ENCODE measurements at regions of chr2 and their contacts with region 1.

Region 1: GRCh38 chr2:45935791-45936622 is 284.5 kb downstream of the PRKCE start:
- DNase-seq: peak; percentile 79
- ATAC-seq: peak; percentile 92
- H3K4me3 ChIP-seq: no peak overlapping the region; a peak in 1 of 6 replicates
- H3K27ac ChIP-seq: no peak overlapping the region
- H3K4me1 ChIP-seq: peaks cover 14% of the 10 kb centered on the region
- H3K27me3 ChIP-seq: no peaks in the 10 kb centered on the region
- CTCF ChIP-seq: peak; percentile 96
- EP300 ChIP-seq: no peak
- POLR2A ChIP-seq: no peak
- RAD21 ChIP-seq: peak; percentile 95

Region 2: DNA sequence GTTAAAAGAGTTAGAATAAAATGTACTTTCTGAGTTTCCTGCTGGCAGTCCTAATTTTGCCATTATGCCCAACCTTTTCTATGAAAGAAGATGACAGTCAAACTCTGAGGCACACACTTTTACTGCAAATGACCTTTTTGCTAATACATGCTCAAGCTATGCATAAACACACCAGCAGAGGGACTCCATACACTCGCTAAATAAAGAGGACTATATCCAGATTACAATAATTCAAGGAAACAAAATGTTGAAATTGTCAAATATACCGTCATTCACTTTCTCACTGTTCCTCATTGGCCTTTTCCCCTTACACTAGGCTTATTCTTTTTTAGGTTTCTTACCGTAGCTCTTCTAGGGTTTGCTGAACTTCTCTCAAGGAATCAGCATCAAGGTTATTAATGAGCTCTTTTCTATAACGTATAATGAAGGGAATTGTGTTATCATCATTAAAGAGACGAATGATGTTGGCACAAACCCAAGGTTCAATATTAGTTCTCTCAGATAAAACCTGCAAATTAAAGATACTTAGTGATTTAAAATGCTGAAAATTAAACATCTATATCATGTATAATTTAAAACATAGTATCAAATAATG is 350.6 kb before region 1 on chr2:
- CTCF ChIA-PET with region 1: no interaction called
- POLR2A ChIA-PET with region 1: no interaction called
- in situ Hi-C with region 1: no loop called
- intact Hi-C with region 1: loop called (anchors 1 kb)
- DNase-seq: peak; percentile 50
- ATAC-seq: peak; percentile 79
- H3K4me3 ChIP-seq: no peak overlapping the region
- H3K27ac ChIP-seq: no peak overlapping the region
- H3K4me1 ChIP-seq: no peaks in the 10 kb centered on the region
- H3K27me3 ChIP-seq: no peaks in the 10 kb centered on the region
- CTCF ChIP-seq: peak; percentile 35
- EP300 ChIP-seq: no peak
- POLR2A ChIP-seq: no peak
- RAD21 ChIP-seq: no peak

Region 3: DNA sequence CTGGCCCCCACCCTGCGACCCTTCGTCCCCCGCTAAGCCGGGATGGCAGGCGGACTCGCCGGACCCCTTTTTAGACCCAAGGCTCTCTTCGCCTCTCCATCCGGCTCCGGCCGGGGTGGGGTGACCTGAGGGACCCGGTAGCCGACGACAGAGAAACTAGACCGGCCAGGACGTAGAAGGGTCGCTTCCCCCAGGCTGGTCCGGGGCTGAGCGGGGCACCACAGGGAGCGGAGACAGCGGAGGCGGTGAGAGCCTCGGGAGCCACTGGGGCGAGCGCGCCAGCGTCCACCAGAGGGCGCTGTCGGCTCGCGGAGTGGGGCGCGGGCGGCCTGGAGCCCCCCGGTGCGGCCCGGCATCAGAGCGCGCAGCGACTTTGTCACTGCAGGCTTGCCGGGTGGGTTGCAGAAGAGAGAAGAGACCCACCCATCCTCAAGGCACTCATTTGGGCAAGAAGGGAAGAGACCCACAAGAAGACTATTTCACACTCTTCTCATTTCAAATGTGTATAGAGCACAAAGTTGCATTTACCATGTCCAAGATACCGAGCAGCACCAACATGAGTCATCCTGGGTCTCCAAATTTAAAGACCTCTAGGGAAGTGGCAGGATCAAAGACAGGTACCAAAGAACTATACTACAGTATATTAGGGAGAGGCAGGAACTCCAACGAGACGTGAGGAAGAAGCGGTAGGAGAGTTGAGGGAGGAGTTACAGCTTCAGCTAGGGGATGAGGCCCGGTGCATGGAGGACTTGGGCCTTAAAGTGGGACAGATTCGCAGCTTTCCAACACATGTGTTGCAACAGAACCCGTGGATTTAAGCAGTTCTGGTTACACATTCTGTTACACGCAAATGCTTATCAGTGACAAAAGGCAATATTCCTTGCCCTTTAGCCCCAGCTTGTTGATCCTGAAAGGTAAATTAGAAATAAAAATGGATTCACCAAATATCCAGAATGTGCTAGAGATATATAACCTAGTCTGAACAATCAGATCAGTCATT is 292.2 kb before region 1 on chr2:
- CTCF ChIA-PET with region 1: interaction called, 31 read pairs
- POLR2A ChIA-PET with region 1: no interaction called
- in situ Hi-C with region 1: loop called (anchors 5 kb)
- intact Hi-C with region 1: loop called (anchors 1 kb)
- DNase-seq: peak; percentile 27
- ATAC-seq: peak; percentile 98
- H3K4me3 ChIP-seq: peak overlapping the region; percentile 23 to 63 (median 41); a peak in 5 of 6 replicates
- H3K27ac ChIP-seq: no peak overlapping the region
- H3K4me1 ChIP-seq: peaks cover 22% of the 10 kb centered on the region
- H3K27me3 ChIP-seq: peaks cover 7 to 43% of the 10 kb centered on the region in 2 experiments; a peak in 4 of 5 replicates
- CTCF ChIP-seq: peak; percentile 96
- EP300 ChIP-seq: no peak
- POLR2A ChIP-seq: no peak
- RAD21 ChIP-seq: peak; percentile 100

Region 4: DNA sequence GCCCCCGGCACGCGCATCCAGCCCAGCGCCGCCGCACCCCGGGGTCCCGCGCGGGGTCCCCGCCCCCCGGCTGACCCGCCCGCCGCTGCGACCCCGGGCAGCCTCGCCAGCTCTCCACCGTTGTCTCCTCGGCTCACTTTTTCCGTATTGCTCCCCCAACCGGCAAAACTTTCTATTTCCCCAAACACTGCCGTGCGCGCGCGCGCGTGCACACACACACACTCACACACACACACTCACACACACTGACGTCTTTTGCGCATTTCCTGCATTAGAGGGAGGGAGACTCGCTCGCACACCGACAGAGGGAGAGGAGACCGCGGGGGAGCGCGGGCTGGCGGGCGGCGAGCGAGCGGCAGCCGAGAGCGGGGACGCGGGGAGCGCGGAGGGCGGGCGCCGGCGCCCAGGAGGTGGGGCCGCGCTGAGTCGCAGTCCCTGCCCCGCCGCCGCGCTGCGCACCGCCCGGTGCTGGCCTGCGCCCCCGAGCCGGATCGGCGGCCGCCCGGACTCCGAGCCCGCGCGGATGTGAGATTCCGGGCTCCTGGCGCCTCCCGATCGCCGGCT is 285.1 kb before region 1 on chr2:
- CTCF ChIA-PET with region 1: interaction called, 3 read pairs
- POLR2A ChIA-PET with region 1: interaction called, 3 read pairs
- in situ Hi-C with region 1: loop called (anchors 5 kb)
- intact Hi-C with region 1: no loop called
- DNase-seq: peak; percentile 92
- ATAC-seq: peak; percentile 88
- H3K4me3 ChIP-seq: peak overlapping the region; percentile 80 to 89 (median 82)
- H3K27ac ChIP-seq: peak overlapping the region; percentile 57
- H3K4me1 ChIP-seq: peaks cover 42% of the 10 kb centered on the region
- H3K27me3 ChIP-seq: peaks cover 0 to 15% of the 10 kb centered on the region in 2 experiments; a peak in 2 of 5 replicates
- CTCF ChIP-seq: peak; percentile 82
- EP300 ChIP-seq: peak in 1 of 2 experiments; percentile 31; a peak in 1 of 4 replicates
- POLR2A ChIP-seq: peak in 1 of 2 experiments; percentile 49; a peak in 1 of 4 replicates
- RAD21 ChIP-seq: peak; percentile 56

Region 5: GRCh38 chr2:45729753-45730512 is 206.1 kb before region 1 on chr2:
- CTCF ChIA-PET with region 1: no interaction called
- POLR2A ChIA-PET with region 1: no interaction called
- in situ Hi-C with region 1: no loop called
- intact Hi-C with region 1: loop called (anchors 1 kb)
- DNase-seq: peak; percentile 57
- ATAC-seq: peak; percentile 95
- H3K4me3 ChIP-seq: no peak overlapping the region
- H3K27ac ChIP-seq: no peak overlapping the region
- H3K4me1 ChIP-seq: no peaks in the 10 kb centered on the region
- H3K27me3 ChIP-seq: no peaks in the 10 kb centered on the region
- CTCF ChIP-seq: peak; percentile 49
- EP300 ChIP-seq: no peak
- POLR2A ChIP-seq: no peak
- RAD21 ChIP-seq: no peak

Region 6: DNA sequence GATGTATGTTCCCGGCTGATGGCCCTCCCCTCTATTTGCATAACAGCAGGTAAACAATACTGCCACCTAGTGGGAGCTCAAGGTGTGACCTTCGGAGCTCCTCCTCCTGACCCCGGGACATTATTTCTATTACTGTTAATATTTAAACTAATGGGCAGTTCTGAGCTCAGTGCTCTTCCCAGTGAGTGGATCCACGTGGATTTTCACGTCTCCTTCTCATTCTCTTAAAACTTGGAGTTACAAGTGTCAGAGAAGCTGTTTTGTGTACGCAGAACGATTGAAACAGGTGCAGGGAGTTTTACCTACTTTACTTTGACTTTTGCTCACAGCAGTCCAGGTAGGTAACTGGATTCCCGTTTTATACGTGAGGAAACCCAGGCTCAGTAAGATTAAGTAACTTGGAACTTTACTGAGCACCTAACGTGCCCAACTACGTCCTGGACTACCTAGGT is 157.3 kb before region 1 on chr2:
- CTCF ChIA-PET with region 1: interaction called, 8 read pairs
- POLR2A ChIA-PET with region 1: no interaction called
- in situ Hi-C with region 1: loop called (anchors 5 kb)
- intact Hi-C with region 1: loop called (anchors 1 kb)
- DNase-seq: peak; percentile 76
- ATAC-seq: peak; percentile 93
- H3K4me3 ChIP-seq: peak overlapping the region in 2 of 3 experiments; percentile 1 to 4; a peak in 1 of 6 replicates
- H3K27ac ChIP-seq: no peak overlapping the region
- H3K4me1 ChIP-seq: peaks cover 11% of the 10 kb centered on the region
- H3K27me3 ChIP-seq: peaks cover 0 to 6% of the 10 kb centered on the region in 2 experiments; a peak in 1 of 5 replicates
- CTCF ChIP-seq: peak; percentile 79
- EP300 ChIP-seq: no peak
- POLR2A ChIP-seq: 0 out of 4 replicates have a peak, but pooled peaks of 1 of the 2 experiments have one; percentile 27
- RAD21 ChIP-seq: peak; percentile 72

Region 7: GRCh38 chr2:45851613-45852304 is 84.2 kb before region 1 on chr2:
- CTCF ChIA-PET with region 1: no interaction called
- POLR2A ChIA-PET with region 1: no interaction called
- in situ Hi-C with region 1: no loop called
- intact Hi-C with region 1: no loop called
- DNase-seq: no peak
- ATAC-seq: no peak
- H3K4me3 ChIP-seq: no peak overlapping the region
- H3K27ac ChIP-seq: no peak overlapping the region
- H3K4me1 ChIP-seq: no peaks in the 10 kb centered on the region
- H3K27me3 ChIP-seq: no peaks in the 10 kb centered on the region
- CTCF ChIP-seq: no peak
- EP300 ChIP-seq: no peak
- POLR2A ChIP-seq: no peak
- RAD21 ChIP-seq: no peak

Measured in HepG2 (cell line).